ENCODE measurements at regions of chr11 and their contacts with region 1.

Region 1: GRCh38 chr11:102666331-102666957 is 39.1 kb downstream of the MMP27 start:
- DNase-seq: peak; percentile 18
- H3K4me3 ChIP-seq: no peak overlapping the region
- H3K27ac ChIP-seq: no peak overlapping the region
- H3K4me1 ChIP-seq: no peaks in the 10 kb centered on the region
- H3K27me3 ChIP-seq: no peaks in the 10 kb centered on the region
- CTCF ChIP-seq: peak; percentile 79 to 87 (median 81)
- EP300 ChIP-seq: no peak
- POLR2A ChIP-seq: no peak

Region 2: DNA sequence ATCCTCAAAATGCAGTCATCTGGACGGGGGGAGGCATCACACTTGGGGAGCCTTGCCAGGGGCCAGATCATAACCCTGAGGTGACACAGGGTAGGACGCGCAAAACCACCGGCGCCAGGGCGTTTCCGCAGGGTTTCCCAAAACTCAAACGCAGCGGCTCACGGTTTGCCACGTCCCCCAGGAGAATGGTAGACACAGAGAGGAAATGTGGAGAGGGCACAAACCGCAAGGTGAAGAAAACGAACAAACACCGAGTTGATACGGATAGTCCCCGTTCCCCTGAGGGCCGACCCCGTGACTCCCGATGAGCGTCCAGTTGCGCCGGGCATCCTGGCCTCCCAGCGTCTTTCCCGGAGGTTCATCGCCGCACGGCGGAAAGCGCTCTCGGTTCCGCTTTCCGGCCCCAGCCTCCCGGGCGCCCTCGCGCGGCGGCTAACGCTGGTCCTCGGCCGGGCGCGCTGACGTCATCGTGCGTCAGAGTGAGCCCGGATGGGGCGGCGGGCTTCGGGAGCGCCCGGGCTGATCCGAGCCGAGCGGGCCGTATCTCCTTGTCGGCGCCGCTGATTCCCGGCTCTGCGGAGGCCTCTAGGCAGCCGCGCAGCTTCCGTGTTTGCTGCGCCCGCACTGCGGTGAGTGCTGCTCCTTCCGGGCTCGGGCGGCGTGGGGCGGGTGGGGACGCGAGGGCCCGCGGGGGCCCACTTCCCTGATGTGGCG is 319.5 kb before region 1 on chr11 and contains the start of gene BIRC2:
- in situ Hi-C with region 1: loop called in 1 of 4 experiments (anchors 25 kb)
- intact Hi-C with region 1: loop called (anchors 2 kb)
- DNase-seq: peak; percentile 97
- H3K4me3 ChIP-seq: peak within 1 kb of the TSS; percentile 68 to 93 (median 74)
- H3K27ac ChIP-seq: peak within 1 kb of the TSS; percentile 98 to 100 (median 99)
- H3K4me1 ChIP-seq: peaks cover 5 to 32% (median 20%) of the 10 kb centered on the region in 4 donors
- H3K27me3 ChIP-seq: no peaks in the 10 kb centered on the region
- CTCF ChIP-seq: peak; percentile 71 to 95 (median 79)
- EP300 ChIP-seq: no peak
- POLR2A ChIP-seq: peak; percentile 89
- total RNA-seq, gene BIRC2: 66.5 to 95.9 (median 73.2) TPM

Region 3: DNA sequence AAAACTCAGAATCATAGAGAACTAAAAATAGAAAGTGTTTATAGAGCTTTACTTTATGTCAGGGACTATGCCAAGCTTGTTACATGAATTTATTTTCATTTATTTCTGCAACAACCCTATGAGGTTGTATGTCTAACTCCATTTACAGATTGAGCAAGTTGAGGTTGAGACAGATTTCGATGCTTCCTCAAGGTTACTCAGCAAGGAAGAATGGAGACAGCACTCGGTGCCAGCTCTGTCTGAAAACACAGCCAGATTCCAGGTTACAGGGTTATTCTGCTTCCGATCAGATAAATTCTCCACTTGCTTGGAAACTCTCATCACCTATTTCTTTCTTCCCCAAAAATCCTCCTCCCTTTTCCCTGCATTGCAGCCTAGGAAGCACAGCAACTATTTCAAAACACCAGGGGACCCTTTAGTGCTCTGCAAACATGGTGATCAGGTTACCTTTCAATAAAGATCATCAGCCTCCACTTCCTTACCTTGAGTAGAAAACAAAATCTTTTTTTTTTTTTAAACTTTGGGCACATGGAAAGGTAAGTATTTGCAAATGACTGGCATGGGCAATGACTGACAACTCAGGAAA is 169.9 kb after region 1 on chr11:
- in situ Hi-C with region 1: no loop called
- intact Hi-C with region 1: no loop called
- DNase-seq: no peak
- H3K4me3 ChIP-seq: no peak overlapping the region
- H3K27ac ChIP-seq: peak overlapping the region in 1 of 4 donors; percentile 11
- H3K4me1 ChIP-seq: peaks cover 0 to 7% (median 0%) of the 10 kb centered on the region in 4 donors
- H3K27me3 ChIP-seq: no peaks in the 10 kb centered on the region
- CTCF ChIP-seq: no peak
- EP300 ChIP-seq: no peak
- POLR2A ChIP-seq: no peak